Ascending aorta (tissue), 2 donors: ENCODE measurements at regions of chr11 and their contacts with region 1.

Region 1: DNA sequence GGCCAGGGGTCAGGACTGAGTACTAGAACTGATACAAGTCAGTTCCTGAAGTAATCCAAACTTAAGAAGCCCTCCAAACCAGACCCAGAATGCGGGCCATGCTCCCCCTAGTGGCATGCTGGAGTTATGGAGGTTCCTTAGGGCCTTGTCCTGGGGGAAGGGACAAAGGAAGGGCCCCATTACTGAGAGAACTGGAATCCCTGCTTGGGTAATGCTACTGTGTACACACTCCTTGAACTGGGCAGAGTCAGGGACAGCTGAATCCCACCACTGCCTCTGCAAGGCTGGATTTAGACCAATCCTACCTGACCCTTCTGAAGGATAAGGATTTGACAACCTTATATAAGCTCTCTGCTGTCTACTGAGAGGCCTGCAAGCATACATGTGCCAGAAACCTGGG is 97.3 kb upstream of the AKIP1 start:
- DNase-seq: peak in 1 of 2 donors; percentile 90
- H3K4me3 ChIP-seq: no peak overlapping the region
- H3K27ac ChIP-seq: no peak overlapping the region
- H3K4me1 ChIP-seq: peaks cover 0 to 7% of the 10 kb centered on the region in 2 donors
- H3K27me3 ChIP-seq: no peaks in the 10 kb centered on the region
- CTCF ChIP-seq: peak; percentile 69 to 94 (median 85)

Region 2: GRCh38 chr11:8688414-8689362 is 125.0 kb before region 1 on chr11:
- intact Hi-C with region 1: loop called (anchors 2 kb)
- DNase-seq: peak; percentile 55 to 97
- H3K4me3 ChIP-seq: peak overlapping the region; percentile 54 to 60
- H3K27ac ChIP-seq: peak overlapping the region; percentile 59 to 77
- H3K4me1 ChIP-seq: peaks cover 5 to 25% of the 10 kb centered on the region in 2 donors
- H3K27me3 ChIP-seq: no peaks in the 10 kb centered on the region
- CTCF ChIP-seq: peak; percentile 9 to 35 (median 20)

Region 3: DNA sequence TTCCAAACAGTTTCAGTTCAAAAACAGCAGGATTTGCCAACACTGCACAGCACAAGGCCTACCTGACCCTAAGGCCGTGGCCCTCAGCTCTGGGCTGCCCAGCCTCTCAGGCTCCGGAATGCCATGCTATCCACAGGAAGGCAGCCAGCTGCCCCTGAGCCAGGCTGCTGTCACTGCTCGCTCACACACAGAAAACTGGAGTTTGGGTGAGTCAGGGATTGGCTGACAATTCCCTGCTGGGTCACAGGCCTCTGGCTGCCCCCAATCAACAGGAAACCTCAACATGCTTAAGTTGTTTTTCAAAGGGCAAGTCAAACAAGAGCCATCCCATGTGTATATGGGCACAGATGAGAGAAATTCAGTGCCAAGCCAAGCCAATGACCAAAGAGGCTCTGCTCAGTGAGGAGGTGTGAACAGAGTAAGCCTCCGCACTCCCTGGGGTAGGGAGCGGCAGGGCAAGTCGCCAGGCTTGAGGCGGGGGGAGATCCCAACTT is 80.9 kb before region 1 on chr11:
- intact Hi-C with region 1: loop called (anchors 2 kb)
- DNase-seq: peak; percentile 70 to 96
- H3K4me3 ChIP-seq: no peak overlapping the region
- H3K27ac ChIP-seq: peak overlapping the region; percentile 75 to 79
- H3K4me1 ChIP-seq: peaks cover 22 to 48% of the 10 kb centered on the region in 2 donors
- H3K27me3 ChIP-seq: no peaks in the 10 kb centered on the region
- CTCF ChIP-seq: no peak

Region 4: GRCh38 chr11:8777907-8778767 is 35.5 kb before region 1 on chr11:
- intact Hi-C with region 1: loop called (anchors 5 kb)
- DNase-seq: peak in 1 of 2 donors; percentile 85
- H3K4me3 ChIP-seq: no peak overlapping the region
- H3K27ac ChIP-seq: peak overlapping the region; percentile 59 to 77
- H3K4me1 ChIP-seq: peaks cover 11 to 52% of the 10 kb centered on the region in 2 donors
- H3K27me3 ChIP-seq: no peaks in the 10 kb centered on the region
- CTCF ChIP-seq: no peak

Region 5: GRCh38 chr11:8794677-8795103 is 19.0 kb before region 1 on chr11:
- intact Hi-C with region 1: no loop called
- DNase-seq: no peak
- H3K4me3 ChIP-seq: no peak overlapping the region
- H3K27ac ChIP-seq: no peak overlapping the region
- H3K4me1 ChIP-seq: peaks cover 0 to 3% of the 10 kb centered on the region in 2 donors
- H3K27me3 ChIP-seq: no peaks in the 10 kb centered on the region
- CTCF ChIP-seq: peak in 1 of 3 experiments; percentile 21

Region 6: DNA sequence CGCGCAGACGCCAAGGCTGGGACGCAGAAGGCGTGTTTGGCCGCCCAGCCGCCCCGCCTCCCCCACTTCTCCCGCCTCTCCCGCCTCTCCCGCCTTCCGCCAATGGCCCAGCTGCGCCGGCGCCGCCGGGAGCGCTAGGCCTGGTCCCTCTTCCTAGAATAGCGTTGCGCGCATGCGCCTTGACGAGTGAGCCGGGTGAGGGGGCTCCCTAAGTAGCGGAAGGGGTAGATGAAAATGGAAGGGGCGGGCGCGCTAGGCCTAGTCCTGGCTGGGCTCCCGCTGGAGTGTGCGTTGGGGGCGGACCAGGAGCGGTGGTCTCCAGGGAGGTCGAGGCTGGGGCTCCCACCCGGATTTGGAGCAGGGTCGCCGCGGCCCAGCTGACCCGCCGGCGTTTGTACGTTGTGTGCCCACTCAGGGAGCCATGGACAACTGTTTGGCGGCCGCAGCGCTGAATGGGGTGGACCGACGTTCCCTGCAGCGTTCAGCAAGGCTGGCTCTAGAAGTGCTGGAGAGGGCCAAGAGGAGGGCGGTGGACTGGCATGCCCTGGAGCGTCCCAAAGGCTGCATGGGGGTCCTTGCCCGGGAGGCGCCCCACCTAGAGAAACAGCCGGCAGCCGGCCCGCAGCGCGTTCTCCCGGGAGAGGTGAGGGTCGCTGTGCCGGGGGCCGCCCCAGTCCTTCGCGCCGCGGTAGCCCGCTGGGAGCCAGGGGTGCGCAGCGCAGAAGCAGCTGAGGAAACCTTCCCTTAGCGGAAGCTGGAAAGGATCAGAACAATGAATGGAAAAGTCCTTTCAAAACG is 97.6 kb after region 1 on chr11 and contains the start of gene AKIP1:
- intact Hi-C with region 1: loop called (anchors 5 kb)
- DNase-seq: peak; percentile 81 to 97
- H3K4me3 ChIP-seq: peak within 1 kb of the TSS; percentile 72 to 79
- H3K27ac ChIP-seq: peak within 1 kb of the TSS; percentile 88 to 91
- H3K4me1 ChIP-seq: peaks cover 4 to 12% of the 10 kb centered on the region in 2 donors
- H3K27me3 ChIP-seq: no peaks in the 10 kb centered on the region
- CTCF ChIP-seq: no peak
- total RNA-seq, gene AKIP1: 11.4 TPM

Region 7: GRCh38 chr11:9137293-9138132 is 323.9 kb after region 1 on chr11:
- intact Hi-C with region 1: loop called (anchors 5 kb)
- DNase-seq: peak in 1 of 2 donors; percentile 86
- H3K4me3 ChIP-seq: no peak overlapping the region
- H3K27ac ChIP-seq: peak overlapping the region; percentile 58 to 67
- H3K4me1 ChIP-seq: peaks cover 7 to 19% of the 10 kb centered on the region in 2 donors
- H3K27me3 ChIP-seq: no peaks in the 10 kb centered on the region
- CTCF ChIP-seq: peak; percentile 87 to 98 (median 92)